IMR-90 (cell line): ENCODE measurements at regions of chr21 and their contacts with region 1.

Region 1: DNA sequence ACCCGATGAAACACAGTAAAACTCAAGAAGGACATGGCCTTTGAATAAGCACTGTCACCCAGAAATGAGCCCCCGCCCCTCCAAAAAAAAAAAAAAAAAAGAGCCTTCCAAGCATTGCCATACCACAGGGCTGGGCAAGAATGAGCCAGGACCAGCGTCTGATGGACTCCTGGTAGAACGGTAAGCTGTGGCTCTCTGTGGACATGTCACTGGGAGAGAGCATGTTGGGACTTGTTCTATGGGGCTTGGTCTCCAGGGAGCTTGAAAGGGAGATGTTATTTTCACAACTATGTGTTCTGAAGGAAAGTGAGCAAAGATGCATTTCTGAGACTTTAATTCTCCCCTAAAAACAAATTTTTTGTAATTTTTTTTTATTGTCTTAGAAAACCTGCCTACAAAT is 6.4 kb downstream of the CLIC6 start:
- DNase-seq: no peak
- ATAC-seq: no peak
- H3K4me3 ChIP-seq: no peak overlapping the region
- H3K27ac ChIP-seq: no peak overlapping the region
- H3K4me1 ChIP-seq: peaks cover 5% of the 10 kb centered on the region; the same call in 1 of the 2 replicates
- H3K27me3 ChIP-seq: peaks cover 70% of the 10 kb centered on the region
- CTCF ChIP-seq: no peak
- POLR2A ChIP-seq: no peak
- RAD21 ChIP-seq: no peak

Region 2: GRCh38 chr21:34745557-34746255 is 70.5 kb after region 1 on chr21:
- CTCF ChIA-PET with region 1: no interaction called
- POLR2A ChIA-PET with region 1: no interaction called
- dilution Hi-C with region 1: no loop called
- in situ Hi-C with region 1: no loop called
- intact Hi-C with region 1: no loop called
- DNase-seq: peak; percentile 86
- ATAC-seq: peak; percentile 99
- H3K4me3 ChIP-seq: no peak overlapping the region
- H3K27ac ChIP-seq: peak overlapping the region; percentile 3; the same call in 1 of the 2 replicates
- H3K4me1 ChIP-seq: 0 out of 2 replicates have a peak, but pooled peaks cover 4% of the 10 kb centered on the region
- H3K27me3 ChIP-seq: no peaks in the 10 kb centered on the region; the same call in 1 of the 2 replicates
- CTCF ChIP-seq: peak; percentile 98
- POLR2A ChIP-seq: peak; percentile 66
- RAD21 ChIP-seq: peak; percentile 99

Region 3: DNA sequence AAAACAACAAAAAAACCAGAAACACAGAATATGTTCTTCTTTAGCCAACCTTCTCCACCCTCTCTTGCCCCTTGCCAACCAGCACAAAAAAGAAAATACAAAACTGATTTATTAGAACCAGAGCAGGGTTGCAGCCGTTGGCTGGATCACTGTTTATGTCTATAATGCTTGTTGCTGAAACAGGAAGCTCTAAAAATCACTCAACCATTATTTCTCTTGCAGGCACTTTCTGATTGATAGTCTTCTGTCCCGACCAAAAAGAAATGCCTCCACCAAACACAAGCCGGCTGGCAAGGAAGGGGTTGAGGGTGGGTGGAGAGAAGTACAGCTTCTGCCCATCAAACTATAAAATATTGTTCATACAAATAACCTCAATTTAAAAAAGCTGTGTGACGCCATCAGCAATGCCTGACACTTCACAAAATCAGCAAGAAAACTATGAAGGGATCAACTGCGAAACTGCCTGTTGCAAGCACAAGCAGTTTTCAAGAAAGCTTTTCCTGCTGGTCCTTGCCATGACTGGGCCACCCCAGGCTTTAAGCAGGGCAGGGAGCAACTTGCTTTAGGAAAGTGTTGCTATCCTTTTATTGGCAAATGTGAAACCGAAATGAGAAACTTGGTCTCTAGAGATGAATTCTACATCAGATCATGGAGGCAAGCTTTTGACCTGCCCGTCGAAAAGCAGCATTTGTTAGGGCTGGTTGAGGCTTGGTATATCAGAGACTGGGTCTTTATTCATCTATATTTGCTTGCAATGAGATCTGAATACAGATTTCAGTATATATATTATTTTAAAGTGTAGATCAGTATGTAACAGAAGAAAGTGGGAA is 199.7 kb after region 1 on chr21:
- CTCF ChIA-PET with region 1: no interaction called
- POLR2A ChIA-PET with region 1: interaction called, 12 read pairs
- dilution Hi-C with region 1: no loop called
- in situ Hi-C with region 1: no loop called
- intact Hi-C with region 1: no loop called
- DNase-seq: no peak
- ATAC-seq: no peak
- H3K4me3 ChIP-seq: no peak overlapping the region
- H3K27ac ChIP-seq: peak overlapping the region; percentile 34; the same call in 1 of the 2 replicates
- H3K4me1 ChIP-seq: peaks cover 32% of the 10 kb centered on the region
- H3K27me3 ChIP-seq: no peaks in the 10 kb centered on the region
- CTCF ChIP-seq: no peak
- POLR2A ChIP-seq: no peak; the same call in 1 of the 2 replicates
- RAD21 ChIP-seq: no peak